Left ventricle myocardium inferior (tissue), 1 donor: ENCODE measurements at regions of chr1 and their contacts with region 1.

Region 1: GRCh38 chr1:241810769-241811405 is 37.1 kb upstream of the EXO1 start:
- DNase-seq: no peak
- H3K4me3 ChIP-seq: no peak overlapping the region
- H3K27ac ChIP-seq: no peak overlapping the region
- H3K4me1 ChIP-seq: no peaks in the 10 kb centered on the region
- H3K27me3 ChIP-seq: peaks cover 5% of the 10 kb centered on the region
- CTCF ChIP-seq: no peak

Region 2: GRCh38 chr1:241600496-241600901 is 210.4 kb before region 1 on chr1:
- intact Hi-C with region 1: loop called (anchors 10 kb)
- DNase-seq: no peak
- H3K4me3 ChIP-seq: no peak overlapping the region
- H3K27ac ChIP-seq: no peak overlapping the region
- H3K4me1 ChIP-seq: peaks cover 4% of the 10 kb centered on the region
- H3K27me3 ChIP-seq: no peaks in the 10 kb centered on the region
- CTCF ChIP-seq: no peak

Region 3: DNA sequence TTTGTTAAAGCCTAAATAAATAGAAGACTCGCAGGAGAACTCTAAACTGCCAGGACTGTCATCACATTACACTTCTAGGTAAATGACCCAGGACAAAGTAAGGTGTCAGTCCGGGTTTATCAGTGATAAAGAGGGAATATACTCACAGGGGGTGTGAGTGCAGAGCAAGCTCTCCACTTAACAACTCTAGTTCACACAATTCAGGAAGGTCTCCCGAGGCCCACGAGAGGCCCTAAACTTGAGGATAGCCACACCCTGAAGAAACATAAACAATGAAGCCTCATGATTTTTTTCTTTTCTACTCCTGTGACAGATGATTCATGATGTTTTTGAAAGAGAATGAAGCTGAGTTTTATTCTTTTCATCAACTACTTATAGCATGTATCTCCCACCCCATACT is 28.5 kb before region 1 on chr1:
- intact Hi-C with region 1: no loop called
- DNase-seq: no peak
- H3K4me3 ChIP-seq: no peak overlapping the region
- H3K27ac ChIP-seq: no peak overlapping the region
- H3K4me1 ChIP-seq: no peaks in the 10 kb centered on the region
- H3K27me3 ChIP-seq: peaks cover 8% of the 10 kb centered on the region
- CTCF ChIP-seq: no peak